Activated CD8-positive, alpha-beta memory T cell treated with anti-CD3 and anti-CD28 coated beads, Interleukin-2, amount 10 ng/mL, durations not matched to agents 7 days and 5 days (primary cell): ENCODE measurements at regions of chr16 and their contacts with region 1.

Region 1: DNA sequence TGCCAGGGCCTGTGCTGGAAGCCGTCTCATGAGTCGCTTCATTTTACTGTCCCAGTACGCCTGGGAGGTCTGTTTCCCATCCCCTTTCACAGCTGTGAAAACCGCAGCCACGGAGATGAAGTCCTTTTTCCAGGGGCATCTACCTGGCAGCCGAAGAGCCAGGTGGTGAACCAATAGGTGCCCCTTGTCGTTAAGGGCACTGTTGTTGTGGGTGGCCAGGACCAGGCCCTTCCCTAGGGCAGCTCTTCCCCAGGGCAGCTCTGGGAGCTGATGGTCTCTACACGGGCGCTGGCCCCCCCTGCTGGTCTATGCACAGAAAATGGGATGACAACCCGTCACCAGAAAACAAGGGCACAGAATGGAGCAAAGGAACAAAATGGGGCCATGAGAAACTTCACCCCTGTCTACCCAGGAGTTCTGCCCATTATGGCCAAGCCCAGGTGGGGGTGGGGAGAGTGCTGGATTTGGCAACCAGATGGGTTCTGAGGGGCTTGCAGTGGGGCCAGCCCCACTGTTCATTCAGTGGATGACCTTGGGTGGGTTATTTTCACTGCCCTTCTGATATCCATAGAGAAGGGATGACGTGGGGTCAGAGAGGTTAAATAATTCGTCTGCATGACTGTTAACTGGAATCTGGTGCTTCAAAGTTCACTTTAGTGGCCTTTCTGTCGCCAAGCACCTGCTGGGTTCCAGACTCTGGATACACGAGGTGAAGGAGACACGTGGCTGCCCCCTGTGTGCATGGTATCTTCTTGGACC is 11.5 kb downstream of the RMI2 start:
- DNase-seq: peak; percentile 70
- ATAC-seq: no peak
- H3K4me3 Mint-ChIP-seq: no peak overlapping the region
- H3K27ac Mint-ChIP-seq: no peak overlapping the region
- H3K4me1 Mint-ChIP-seq: peaks cover 69% of the 10 kb centered on the region
- H3K27me3 Mint-ChIP-seq: peaks cover 46% of the 10 kb centered on the region

Region 2: GRCh38 chr16:11312718-11313492 is 43.8 kb before region 1 on chr16:
- CTCF ChIA-PET with region 1: interaction called, 11 read pairs
- DNase-seq: peak; percentile 67
- ATAC-seq: peak; percentile 34
- H3K4me3 Mint-ChIP-seq: peak overlapping the region; percentile 8
- H3K27ac Mint-ChIP-seq: peak overlapping the region; percentile 81
- H3K4me1 Mint-ChIP-seq: peaks cover 65% of the 10 kb centered on the region
- H3K27me3 Mint-ChIP-seq: no peaks in the 10 kb centered on the region

Region 3: DNA sequence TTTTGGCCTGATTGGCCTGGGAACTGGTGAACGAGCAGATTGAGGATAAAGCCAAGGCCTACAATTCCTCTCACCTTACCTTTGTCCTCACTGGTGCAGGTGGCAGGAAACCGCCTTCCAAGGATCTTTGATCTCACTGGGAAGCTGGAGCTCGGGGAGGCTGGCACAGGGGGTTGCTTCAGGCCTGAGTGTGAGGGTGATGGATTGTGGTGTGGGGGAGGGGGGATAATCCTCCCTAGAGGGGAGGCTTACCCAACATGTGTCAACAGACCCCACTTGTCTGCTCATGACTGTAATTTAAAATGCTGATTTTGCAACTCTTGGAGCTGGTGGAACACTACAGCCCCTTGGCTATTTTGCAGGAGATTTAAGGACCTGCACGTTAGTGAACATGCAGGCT is 16.0 kb before region 1 on chr16:
- CTCF ChIA-PET with region 1: no interaction called
- DNase-seq: no peak
- ATAC-seq: no peak
- H3K4me3 Mint-ChIP-seq: no peak overlapping the region
- H3K27ac Mint-ChIP-seq: no peak overlapping the region
- H3K4me1 Mint-ChIP-seq: peaks cover 28% of the 10 kb centered on the region
- H3K27me3 Mint-ChIP-seq: no peaks in the 10 kb centered on the region

Region 4: GRCh38 chr16:11370084-11370931 is 13.6 kb after region 1 on chr16:
- CTCF ChIA-PET with region 1: interaction called, 13 read pairs
- DNase-seq: no peak
- ATAC-seq: no peak
- H3K4me3 Mint-ChIP-seq: no peak overlapping the region
- H3K27ac Mint-ChIP-seq: no peak overlapping the region
- H3K4me1 Mint-ChIP-seq: peaks cover 6% of the 10 kb centered on the region
- H3K27me3 Mint-ChIP-seq: peaks cover 21% of the 10 kb centered on the region

Region 5: GRCh38 chr16:11560701-11561449 is 204.1 kb after region 1 on chr16:
- CTCF ChIA-PET with region 1: no interaction called
- DNase-seq: peak; percentile 86
- ATAC-seq: peak; percentile 95
- H3K4me3 Mint-ChIP-seq: peak overlapping the region; percentile 75
- H3K27ac Mint-ChIP-seq: peak overlapping the region; percentile 91
- H3K4me1 Mint-ChIP-seq: peaks cover 68% of the 10 kb centered on the region
- H3K27me3 Mint-ChIP-seq: no peaks in the 10 kb centered on the region